Adrenal gland (tissue), 19 donors: ENCODE measurements at regions of chr10 and their contacts with region 1.

Region 1: GRCh38 chr10:102001435-102002068 is 54.4 kb downstream of the ARMH3 start:
- DNase-seq: no peak
- H3K4me3 ChIP-seq: no peak overlapping the region
- H3K27ac ChIP-seq: no peak overlapping the region
- H3K4me1 ChIP-seq: peaks cover 0 to 7% of the 10 kb centered on the region in 2 donors
- H3K27me3 ChIP-seq: no peaks in the 10 kb centered on the region
- CTCF ChIP-seq: no peak
- POLR2A ChIP-seq: no peak

Region 2: DNA sequence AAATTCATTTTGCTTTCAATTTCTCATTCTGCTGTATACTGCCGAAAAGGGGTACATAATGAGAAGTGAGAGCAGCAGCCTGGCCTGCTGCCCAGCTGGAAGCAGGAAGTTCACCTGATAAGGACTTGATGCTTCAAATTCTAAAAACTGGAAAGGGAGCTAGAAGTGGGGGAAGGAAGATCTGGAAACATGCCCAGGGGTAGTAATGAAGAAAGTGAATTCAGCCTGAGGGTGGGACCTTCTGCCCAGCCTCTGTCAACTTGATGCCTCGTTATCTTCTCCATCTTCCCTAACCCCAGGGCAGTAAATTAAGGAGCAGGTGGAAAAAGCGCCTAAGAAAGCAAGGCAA is 15.0 kb before region 1 on chr10:
- intact Hi-C with region 1: loop called in 1 of 2 experiments (anchors 2 kb)
- DNase-seq: peak in 6 of 7 donors; percentile 28 to 78 (median 48)
- H3K4me3 ChIP-seq: peak overlapping the region in 1 of 4 donors; percentile 11
- H3K27ac ChIP-seq: peak overlapping the region in 3 of 5 donors; percentile 22 to 68 (median 25)
- H3K4me1 ChIP-seq: peaks cover 0 to 14% of the 10 kb centered on the region in 2 donors
- H3K27me3 ChIP-seq: no peaks in the 10 kb centered on the region
- CTCF ChIP-seq: no peak
- POLR2A ChIP-seq: no peak